ENCODE measurements at regions of chr20 and their contacts with region 1.

Region 1: DNA sequence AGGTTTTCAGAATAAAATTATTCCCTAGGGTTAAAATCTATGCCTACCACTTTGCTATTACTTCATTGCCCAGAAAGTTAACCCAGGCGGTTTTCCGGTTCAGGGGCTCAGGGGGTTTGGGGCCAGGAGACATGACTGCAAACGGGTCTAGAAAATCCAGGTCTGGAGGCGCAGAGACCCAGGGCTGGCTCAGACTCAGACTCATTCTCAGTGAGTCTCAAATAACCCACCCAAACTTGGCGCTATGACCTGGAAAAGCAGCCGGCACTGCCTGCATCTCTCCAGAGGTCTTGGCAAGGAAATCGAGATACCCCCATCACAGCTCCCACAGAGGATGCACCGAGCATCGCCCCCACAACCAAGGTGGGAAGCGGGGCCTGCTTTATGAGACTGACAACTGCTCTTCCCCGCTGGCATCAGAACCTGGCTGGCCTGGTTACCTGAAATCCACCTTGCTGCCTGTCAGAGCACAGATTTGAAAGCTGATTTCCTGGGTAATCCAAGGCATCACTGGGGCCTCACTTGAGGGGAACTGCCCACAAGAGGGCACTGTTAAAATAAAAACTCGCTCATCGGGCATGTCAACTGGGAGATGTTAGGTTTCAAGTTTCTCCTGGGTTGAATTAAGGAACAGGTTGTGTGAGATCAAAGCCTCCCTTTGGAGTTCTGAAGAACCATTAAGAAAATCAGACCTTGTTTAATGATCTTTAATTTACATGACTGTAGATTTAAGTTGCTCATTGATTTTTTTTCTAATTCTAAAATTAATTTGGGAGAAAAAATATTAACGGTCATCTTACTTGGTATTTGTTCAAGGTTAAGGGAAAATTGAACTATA is 55.1 kb downstream of the KIF16B start:
- DNase-seq: no peak
- ATAC-seq: no peak

Region 2: DNA sequence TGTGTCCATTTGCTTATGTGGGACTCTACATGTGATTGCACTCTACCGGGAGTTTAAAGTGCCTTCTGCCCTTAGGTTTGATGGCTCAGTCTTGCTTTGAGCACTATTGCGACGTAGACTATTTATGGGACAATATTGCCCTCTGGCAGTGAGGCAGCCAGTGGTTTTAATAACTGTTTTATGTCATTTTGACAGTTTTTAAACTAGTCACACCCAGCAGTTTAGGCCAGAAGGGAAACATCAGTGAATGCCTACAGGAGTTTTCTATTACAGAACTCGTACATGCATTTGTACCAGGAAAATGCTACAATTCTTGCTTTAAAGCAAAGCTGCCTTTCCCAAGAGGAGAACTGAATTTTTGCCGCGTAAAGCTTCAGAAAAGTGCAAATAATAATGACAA is 758.6 kb before region 1 on chr20:
- intact Hi-C with region 1: no loop called
- DNase-seq: no peak
- ATAC-seq: no peak

Region 3: DNA sequence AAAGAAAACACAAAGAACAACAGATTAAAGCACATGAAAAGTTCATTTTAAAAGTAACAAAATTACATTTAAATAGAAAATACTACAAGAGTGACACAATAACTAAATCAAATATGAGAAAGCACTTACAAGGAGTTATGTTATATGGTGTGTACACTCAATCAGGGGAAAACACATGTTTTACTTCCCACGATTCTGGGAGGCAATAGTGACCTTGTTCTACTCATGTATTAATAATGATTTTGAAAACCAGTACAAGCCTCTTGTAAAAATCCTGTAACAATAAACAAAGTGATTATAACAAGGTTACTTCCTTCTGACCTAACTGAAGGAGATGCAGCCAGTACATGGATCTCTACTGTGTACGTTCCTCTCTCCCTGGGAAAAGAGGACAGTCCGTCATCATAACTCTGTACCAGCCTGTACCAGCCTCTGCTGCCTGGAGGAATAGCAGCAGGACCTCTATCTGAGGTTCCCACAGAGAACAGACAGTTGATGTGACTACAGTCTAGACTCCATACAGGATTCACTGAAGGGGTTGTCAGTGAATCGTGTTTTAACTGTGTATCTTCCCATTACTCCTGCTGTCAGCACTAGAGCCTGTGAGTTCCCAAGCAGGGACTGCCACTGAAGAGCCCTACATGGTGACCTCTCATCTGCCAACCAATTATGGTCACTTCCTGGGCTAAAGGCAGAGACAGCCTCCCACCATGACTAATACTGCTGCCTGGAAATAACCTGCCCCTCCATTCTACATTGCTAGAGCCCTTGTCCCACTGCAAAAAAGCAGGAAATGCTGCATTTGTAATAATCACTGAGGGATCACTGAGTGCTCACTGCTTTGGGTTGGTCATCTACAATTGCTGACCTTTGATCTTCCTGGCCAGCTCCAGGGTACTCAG is 94.6 kb before region 1 on chr20:
- intact Hi-C with region 1: no loop called
- DNase-seq: no peak
- ATAC-seq: no peak

Region 4: DNA sequence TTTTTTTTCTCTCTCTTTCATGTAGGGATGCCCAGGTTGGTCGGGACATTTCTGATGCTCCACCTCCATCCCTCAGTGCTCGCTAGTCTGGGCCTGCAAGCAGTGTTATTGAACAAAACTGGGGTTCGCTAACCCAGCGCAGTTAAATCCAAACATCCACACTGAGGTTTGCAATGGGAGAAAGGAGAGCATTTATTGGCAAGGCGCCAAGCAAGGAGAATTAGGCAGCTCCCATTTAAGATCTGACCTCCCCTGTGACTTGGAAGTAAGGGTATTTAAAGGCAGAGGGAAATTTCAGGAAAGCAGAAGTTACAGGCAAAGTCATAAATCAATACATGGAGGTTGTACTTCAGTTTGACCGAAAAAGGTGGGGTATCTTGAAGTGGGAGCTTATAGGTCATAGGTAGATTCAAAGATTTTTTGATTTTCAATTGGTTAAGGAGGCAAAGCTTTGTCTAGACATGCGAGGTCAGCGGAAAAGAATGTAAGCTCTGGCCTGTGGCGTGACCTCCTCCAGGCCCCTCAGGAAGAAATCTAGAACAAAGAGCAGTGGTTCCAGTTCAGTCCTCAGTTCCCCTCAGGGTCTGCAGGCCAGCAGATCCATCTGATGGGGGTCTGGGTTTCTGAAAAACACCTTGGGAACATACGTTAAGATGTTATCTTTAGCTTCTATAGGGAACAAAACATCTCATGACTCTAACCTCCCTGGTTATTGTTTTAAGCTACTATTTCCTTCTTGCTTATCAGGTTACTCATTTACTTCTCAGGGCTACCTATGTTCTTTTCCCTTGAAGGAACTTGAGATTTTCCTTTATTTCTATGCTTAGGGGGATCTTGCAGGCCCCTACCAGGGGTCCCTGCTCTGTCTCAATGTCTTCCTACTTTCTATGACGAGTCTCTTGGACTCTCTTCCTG is 121.1 kb after region 1 on chr20:
- intact Hi-C with region 1: loop called (anchors 1 kb)
- DNase-seq: no peak
- ATAC-seq: no peak

Region 5: GRCh38 chr20:16761305-16761829 is 243.2 kb after region 1 on chr20:
- intact Hi-C with region 1: loop called (anchors 5 kb)
- DNase-seq: no peak
- ATAC-seq: peak; percentile 56